T-cell (primary cell): ENCODE measurements at regions of chr6 and their contacts with region 1.

Region 1: DNA sequence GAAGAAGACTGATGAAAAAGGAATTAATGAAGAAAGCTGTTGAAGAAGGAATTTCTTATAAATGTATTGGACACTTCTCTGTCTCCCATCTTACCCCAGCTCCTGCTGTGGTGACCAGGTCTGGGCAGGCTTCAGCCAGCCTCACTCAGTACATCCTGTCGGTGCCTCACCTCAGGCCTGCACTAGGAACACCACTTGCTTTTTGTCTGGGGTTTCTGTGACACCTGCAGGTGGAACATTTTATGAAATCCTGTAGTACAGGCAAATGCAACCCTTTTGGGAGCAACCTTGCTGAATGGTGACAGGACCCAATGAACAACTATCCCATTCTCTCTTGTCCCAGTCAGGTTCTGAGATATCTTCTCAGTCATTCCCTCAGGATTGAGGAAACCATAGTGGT is 129.7 kb downstream of the PRDM13 start:
- DNase-seq: peak in 1 of 35 experiments; percentile 4
- ATAC-seq: no peak
- H3K4me3 ChIP-seq: no peak overlapping the region
- H3K4me3 Mint-ChIP-seq: no peak overlapping the region
- H3K27ac ChIP-seq: no peak overlapping the region
- H3K27ac Mint-ChIP-seq: no peak overlapping the region
- H3K4me1 ChIP-seq: no peaks in the 10 kb centered on the region
- H3K4me1 Mint-ChIP-seq: no peaks in the 10 kb centered on the region
- H3K27me3 ChIP-seq: peaks cover 6 to 11% of the 10 kb centered on the region in 2 experiments
- H3K27me3 Mint-ChIP-seq: peaks cover 33 to 51% of the 10 kb centered on the region in 2 donors

Region 2: GRCh38 chr6:98992535-98992934 is 743.8 kb before region 1 on chr6:
- CTCF ChIA-PET with region 1: no interaction called
- POLR2A ChIA-PET with region 1: no interaction called
- DNase-seq: no peak
- ATAC-seq: no peak
- H3K4me3 ChIP-seq: no peak overlapping the region
- H3K4me3 Mint-ChIP-seq: no peak overlapping the region
- H3K27ac ChIP-seq: no peak overlapping the region
- H3K27ac Mint-ChIP-seq: no peak overlapping the region
- H3K4me1 ChIP-seq: no peaks in the 10 kb centered on the region
- H3K4me1 Mint-ChIP-seq: no peaks in the 10 kb centered on the region
- H3K27me3 ChIP-seq: no peaks in the 10 kb centered on the region
- H3K27me3 Mint-ChIP-seq: peaks cover 20 to 43% of the 10 kb centered on the region in 2 donors

Region 3: GRCh38 chr6:99568103-99568933 is 168.0 kb before region 1 on chr6 and contains the start of gene CCNC:
- CTCF ChIA-PET with region 1: no interaction called
- POLR2A ChIA-PET with region 1: interaction called in 1 of 2 experiments, 11 read pairs
- DNase-seq: peak; percentile 80 to 91 (median 85)
- ATAC-seq: peak; percentile 94 to 98 (median 96)
- H3K4me3 ChIP-seq: peak within 1 kb of the TSS; percentile 65 to 77
- H3K4me3 Mint-ChIP-seq: peak within 1 kb of the TSS; percentile 93 to 100 (median 100)
- H3K27ac ChIP-seq: peak within 1 kb of the TSS; percentile 38
- H3K27ac Mint-ChIP-seq: peak within 1 kb of the TSS; percentile 95 to 97
- H3K4me1 ChIP-seq: peaks cover 5 to 6% of the 10 kb centered on the region in 2 experiments
- H3K4me1 Mint-ChIP-seq: peaks cover 33 to 45% (median 40%) of the 10 kb centered on the region in 3 donors
- H3K27me3 ChIP-seq: no peaks in the 10 kb centered on the region
- H3K27me3 Mint-ChIP-seq: no peaks in the 10 kb centered on the region
- total RNA-seq, gene CCNC: 33.9 to 42.0 (median 39.1) TPM

Region 4: DNA sequence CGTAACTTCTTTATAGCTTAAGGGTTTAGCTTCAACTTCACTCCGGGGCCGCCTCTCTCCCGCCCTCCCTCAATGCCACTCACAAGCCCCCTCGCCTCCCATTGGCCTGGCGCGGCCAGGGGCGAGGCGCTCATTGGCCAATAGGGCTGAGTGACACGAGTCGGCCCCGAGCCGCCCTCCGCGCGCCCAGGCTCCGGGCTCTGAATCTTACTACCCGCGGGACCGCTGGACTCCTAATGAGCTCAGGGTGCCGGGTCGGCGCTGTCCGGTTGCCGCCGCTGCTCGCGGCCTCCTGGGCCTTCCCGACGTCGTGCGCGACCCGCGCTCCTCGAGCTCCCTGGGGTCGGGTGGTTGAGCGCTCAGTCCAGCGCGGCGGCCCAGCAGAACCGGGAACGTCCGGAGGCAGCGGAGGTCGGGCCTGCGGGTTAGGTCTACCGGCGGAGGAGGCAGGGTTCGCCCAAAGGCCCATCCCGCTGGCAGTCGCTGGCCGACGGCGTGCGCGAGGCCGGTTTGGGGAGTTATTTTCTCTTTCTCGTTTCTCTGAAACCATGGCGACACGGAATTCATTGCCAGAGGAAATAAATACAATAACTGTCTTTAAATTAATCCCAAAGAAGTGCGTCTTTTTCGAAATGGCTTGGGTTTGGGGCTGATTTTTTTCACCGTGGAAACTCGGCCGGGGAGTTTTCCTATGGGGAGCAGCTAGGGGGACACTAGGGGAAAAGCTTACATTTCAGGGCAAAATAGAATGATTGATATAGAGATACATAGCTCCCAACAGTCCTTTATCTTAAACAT is 728.8 kb after region 1 on chr6 and contains the start of gene SIM1:
- CTCF ChIA-PET with region 1: no interaction called
- POLR2A ChIA-PET with region 1: no interaction called
- DNase-seq: no peak
- ATAC-seq: peak in 1 of 4 experiments; percentile 24
- H3K4me3 ChIP-seq: peak within 1 kb of the TSS in 1 of 2 donors; percentile 65
- H3K4me3 Mint-ChIP-seq: peak within 1 kb of the TSS; percentile 6 to 54 (median 28)
- H3K27ac ChIP-seq: no peak within 1 kb of the TSS
- H3K27ac Mint-ChIP-seq: peak within 1 kb of the TSS in 1 of 2 donors; percentile 23
- H3K4me1 ChIP-seq: peaks cover 0 to 45% of the 10 kb centered on the region in 2 experiments
- H3K4me1 Mint-ChIP-seq: peaks cover 31 to 43% (median 35%) of the 10 kb centered on the region in 3 donors
- H3K27me3 ChIP-seq: peaks cover 41 to 76% of the 10 kb centered on the region in 2 experiments
- H3K27me3 Mint-ChIP-seq: peaks cover 77 to 91% of the 10 kb centered on the region in 2 donors
- total RNA-seq, gene SIM1: not detected